OCI-LY7 (cell line): ENCODE measurements at regions of chr17 and their contacts with region 1.

Region 1: GRCh38 chr17:29931231-29931932 is 1.4 kb upstream of the SSH2 start:
- DNase-seq: peak; percentile 99
- H3K4me3 ChIP-seq: peak overlapping the region; percentile 84
- H3K27ac ChIP-seq: peak overlapping the region; percentile 95
- H3K4me1 ChIP-seq: peaks cover 31% of the 10 kb centered on the region
- CTCF ChIP-seq: peak; percentile 98

Region 2: GRCh38 chr17:29722411-29723198 is 208.8 kb before region 1 on chr17:
- CTCF ChIA-PET with region 1: no interaction called
- POLR2A ChIA-PET with region 1: interaction called, 5 read pairs
- intact Hi-C with region 1: loop called (anchors 5 kb)
- DNase-seq: peak; percentile 95
- H3K4me3 ChIP-seq: peak overlapping the region; percentile 64
- H3K27ac ChIP-seq: peak overlapping the region; percentile 96
- H3K4me1 ChIP-seq: peaks cover 87% of the 10 kb centered on the region
- CTCF ChIP-seq: no peak

Region 3: DNA sequence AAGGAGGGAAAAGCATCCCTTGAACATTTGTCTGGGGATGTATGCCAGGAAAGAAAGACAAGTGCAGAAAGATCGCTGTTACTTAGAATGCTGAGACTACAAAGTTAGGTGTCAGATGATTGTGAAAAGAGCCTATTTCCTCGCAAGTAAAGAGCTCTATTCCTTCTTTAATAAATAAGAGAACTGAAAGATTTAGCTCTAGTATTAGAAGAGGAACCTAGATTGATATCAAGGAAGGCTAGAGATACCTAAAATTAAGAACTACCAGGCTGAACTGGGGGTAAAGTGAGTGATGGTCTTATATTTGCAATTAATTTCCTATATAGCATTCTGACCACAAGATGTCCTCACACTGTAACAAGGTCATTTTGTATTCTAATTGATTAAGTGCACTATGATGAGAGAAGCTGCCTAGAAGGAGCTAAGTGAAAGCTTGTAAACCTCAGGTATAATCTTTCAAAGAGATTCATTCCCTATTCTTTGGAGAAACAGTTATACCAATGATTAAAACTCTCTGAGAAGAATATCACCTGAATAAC is 63.7 kb before region 1 on chr17:
- CTCF ChIA-PET with region 1: interaction called, 9 read pairs
- POLR2A ChIA-PET with region 1: interaction called, 8 read pairs
- intact Hi-C with region 1: loop called (anchors 1 kb)
- DNase-seq: peak; percentile 24
- H3K4me3 ChIP-seq: no peak overlapping the region
- H3K27ac ChIP-seq: no peak overlapping the region
- H3K4me1 ChIP-seq: peaks cover 20% of the 10 kb centered on the region
- CTCF ChIP-seq: peak; percentile 78

Region 4: DNA sequence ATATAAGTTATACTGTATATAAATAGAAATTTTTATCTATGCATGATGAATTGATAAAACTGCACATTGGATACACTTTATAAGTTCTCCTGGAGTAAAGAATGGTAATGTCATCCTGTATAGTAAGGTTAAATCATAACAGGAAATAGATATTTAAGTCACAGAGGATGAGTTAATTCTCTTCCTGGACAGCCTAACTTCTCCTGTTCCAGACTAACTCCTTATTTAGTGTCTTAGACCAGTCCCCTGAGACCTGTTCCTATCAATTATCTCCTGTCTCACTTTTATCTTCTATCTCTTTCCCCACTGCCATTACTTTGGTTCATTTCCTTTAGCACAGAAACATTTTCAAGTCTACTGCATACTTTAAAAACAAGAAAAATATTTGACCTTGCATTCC is 47.9 kb before region 1 on chr17:
- CTCF ChIA-PET with region 1: no interaction called
- POLR2A ChIA-PET with region 1: no interaction called
- intact Hi-C with region 1: no loop called
- DNase-seq: no peak
- H3K4me3 ChIP-seq: no peak overlapping the region
- H3K27ac ChIP-seq: no peak overlapping the region
- H3K4me1 ChIP-seq: peaks cover 19% of the 10 kb centered on the region
- CTCF ChIP-seq: no peak

Region 5: DNA sequence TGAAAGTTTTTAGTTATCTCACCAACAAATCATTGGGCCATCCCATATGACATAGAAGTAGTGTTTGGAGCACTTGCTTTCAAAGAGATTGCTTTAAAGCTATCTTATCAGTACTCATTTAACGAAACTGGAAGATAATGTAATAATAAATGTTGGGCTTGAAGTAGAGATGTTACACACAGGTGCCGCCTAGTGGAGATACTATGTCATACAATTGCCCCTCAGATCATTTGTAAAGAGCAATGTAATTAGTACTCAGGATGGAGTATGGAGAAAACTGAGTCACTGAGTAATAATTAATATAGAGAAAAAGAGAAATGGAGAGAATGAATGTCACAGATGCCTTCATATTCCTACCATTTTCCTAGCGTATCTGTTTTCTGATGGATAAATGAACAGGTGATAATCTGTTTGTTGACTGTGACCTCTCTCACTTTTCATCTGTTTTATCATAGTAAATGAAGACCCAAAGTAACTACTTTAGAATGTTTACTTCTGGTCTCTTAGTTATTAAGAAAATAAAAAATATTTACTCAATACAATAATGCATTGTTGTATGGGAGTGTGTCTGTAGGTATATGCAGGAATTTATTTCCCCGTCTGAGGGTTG is 90.4 kb after region 1 on chr17:
- CTCF ChIA-PET with region 1: no interaction called
- POLR2A ChIA-PET with region 1: no interaction called
- intact Hi-C with region 1: loop called (anchors 5 kb)
- DNase-seq: peak; percentile 67
- H3K4me3 ChIP-seq: no peak overlapping the region
- H3K27ac ChIP-seq: no peak overlapping the region
- H3K4me1 ChIP-seq: no peaks in the 10 kb centered on the region
- CTCF ChIP-seq: peak; percentile 99

Region 6: DNA sequence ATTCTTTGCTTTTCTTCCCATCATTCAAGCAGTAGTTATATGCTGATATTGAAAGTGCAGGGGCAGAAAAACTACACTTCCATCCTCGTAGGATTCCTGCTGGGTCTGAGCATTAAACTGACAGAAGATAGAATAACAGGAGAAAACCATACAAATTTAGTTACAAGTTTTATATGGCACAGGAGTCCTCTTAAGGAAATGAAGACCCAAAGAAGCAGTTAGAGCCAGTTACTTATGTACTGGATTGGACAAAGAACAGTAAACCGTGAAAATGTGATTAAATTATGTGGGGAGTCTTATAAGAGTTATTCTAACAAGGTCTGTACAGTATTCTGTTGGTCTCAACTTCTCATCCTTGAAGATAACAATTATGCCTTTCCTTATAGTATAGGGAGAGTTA is 104.0 kb after region 1 on chr17:
- CTCF ChIA-PET with region 1: no interaction called
- POLR2A ChIA-PET with region 1: no interaction called
- intact Hi-C with region 1: no loop called
- DNase-seq: no peak
- H3K4me3 ChIP-seq: no peak overlapping the region
- H3K27ac ChIP-seq: no peak overlapping the region
- H3K4me1 ChIP-seq: no peaks in the 10 kb centered on the region
- CTCF ChIP-seq: no peak

Region 7: DNA sequence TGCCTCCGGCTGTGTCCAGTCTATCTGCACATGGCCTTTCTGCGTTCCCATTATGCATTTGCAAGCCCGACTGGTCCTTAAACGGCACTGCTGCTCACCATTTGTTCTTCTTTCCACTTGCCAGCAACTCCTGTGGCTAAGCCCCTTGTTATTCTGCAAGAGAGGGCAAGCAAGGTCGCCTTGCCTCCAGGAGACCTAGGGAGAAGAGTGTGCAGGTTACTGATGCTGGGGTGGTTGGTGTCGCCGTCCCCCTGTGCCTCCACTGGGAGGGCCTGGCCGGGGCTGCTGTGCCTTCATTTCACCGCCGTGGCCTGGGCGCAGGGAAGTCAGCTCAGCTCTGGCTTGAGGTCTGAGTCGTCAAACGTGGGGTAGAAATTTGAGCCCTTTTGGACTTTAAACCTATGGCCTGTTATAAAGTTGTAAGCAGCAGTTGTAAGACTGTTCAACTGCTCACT is 291.4 kb after region 1 on chr17:
- CTCF ChIA-PET with region 1: no interaction called
- POLR2A ChIA-PET with region 1: no interaction called
- intact Hi-C with region 1: no loop called
- DNase-seq: no peak
- H3K4me3 ChIP-seq: no peak overlapping the region
- H3K27ac ChIP-seq: no peak overlapping the region
- H3K4me1 ChIP-seq: no peaks in the 10 kb centered on the region
- CTCF ChIP-seq: no peak